ENCODE measurements at regions of chr1 and their contacts with region 1.

Region 1: DNA sequence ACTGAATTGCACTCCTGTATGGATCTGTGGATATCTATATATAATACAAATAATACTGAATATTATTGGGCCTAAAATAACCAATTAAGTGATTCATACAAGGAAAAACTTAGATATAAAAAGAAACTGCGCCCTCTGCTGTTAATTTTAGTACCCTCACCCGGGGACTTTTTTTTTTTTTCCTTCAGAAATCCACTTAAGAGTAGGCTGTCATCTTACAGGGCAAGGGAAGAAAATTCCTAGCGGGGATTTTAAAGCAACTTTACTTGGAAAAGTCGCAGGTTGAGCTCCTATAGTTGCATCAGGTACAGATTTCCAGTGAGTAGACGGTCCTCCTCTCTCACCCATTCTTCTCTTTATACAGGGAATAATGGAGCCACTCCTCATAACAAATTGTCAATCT is 1.3 kb downstream of the NTNG1 start:
- DNase-seq: peak; percentile 89
- H3K4me3 ChIP-seq: peak overlapping the region; percentile 92
- H3K27ac ChIP-seq: peak overlapping the region; percentile 91
- H3K4me1 ChIP-seq: peaks cover 41% of the 10 kb centered on the region
- H3K27me3 ChIP-seq: no peaks in the 10 kb centered on the region
- CTCF ChIP-seq: peak; percentile 77

Region 2: GRCh38 chr1:106022312-106022902 is 1119.7 kb before region 1 on chr1:
- CTCF ChIA-PET with region 1: no interaction called
- POLR2A ChIA-PET with region 1: no interaction called
- intact Hi-C with region 1: loop called (anchors 10 kb)
- DNase-seq: peak; percentile 54
- H3K4me3 ChIP-seq: no peak overlapping the region
- H3K27ac ChIP-seq: peak overlapping the region; percentile 15
- H3K4me1 ChIP-seq: peaks cover 7% of the 10 kb centered on the region
- H3K27me3 ChIP-seq: no peaks in the 10 kb centered on the region
- CTCF ChIP-seq: peak; percentile 71

Region 3: DNA sequence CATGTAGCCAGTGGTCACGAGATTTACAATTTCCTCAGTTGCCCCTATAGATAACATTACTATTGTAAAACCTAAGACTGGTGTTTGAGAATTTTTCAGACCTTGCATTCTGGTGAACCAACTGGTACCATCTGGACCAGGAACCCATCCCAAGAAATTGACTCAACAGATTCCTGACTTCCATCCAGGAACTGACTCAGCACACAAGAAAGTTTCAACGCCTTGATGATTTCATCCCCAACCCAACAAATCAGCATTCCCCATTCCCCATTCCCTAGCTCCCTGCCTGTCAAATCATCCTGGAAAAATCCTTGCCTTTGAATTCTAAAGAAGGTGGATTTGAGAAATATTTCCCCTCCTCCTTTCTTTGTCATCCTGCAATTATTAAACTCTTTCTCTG is 615.5 kb before region 1 on chr1:
- CTCF ChIA-PET with region 1: no interaction called
- POLR2A ChIA-PET with region 1: no interaction called
- intact Hi-C with region 1: no loop called
- DNase-seq: no peak
- H3K4me3 ChIP-seq: no peak overlapping the region
- H3K27ac ChIP-seq: no peak overlapping the region
- H3K4me1 ChIP-seq: peaks cover 9% of the 10 kb centered on the region
- H3K27me3 ChIP-seq: no peaks in the 10 kb centered on the region
- CTCF ChIP-seq: no peak

Region 4: DNA sequence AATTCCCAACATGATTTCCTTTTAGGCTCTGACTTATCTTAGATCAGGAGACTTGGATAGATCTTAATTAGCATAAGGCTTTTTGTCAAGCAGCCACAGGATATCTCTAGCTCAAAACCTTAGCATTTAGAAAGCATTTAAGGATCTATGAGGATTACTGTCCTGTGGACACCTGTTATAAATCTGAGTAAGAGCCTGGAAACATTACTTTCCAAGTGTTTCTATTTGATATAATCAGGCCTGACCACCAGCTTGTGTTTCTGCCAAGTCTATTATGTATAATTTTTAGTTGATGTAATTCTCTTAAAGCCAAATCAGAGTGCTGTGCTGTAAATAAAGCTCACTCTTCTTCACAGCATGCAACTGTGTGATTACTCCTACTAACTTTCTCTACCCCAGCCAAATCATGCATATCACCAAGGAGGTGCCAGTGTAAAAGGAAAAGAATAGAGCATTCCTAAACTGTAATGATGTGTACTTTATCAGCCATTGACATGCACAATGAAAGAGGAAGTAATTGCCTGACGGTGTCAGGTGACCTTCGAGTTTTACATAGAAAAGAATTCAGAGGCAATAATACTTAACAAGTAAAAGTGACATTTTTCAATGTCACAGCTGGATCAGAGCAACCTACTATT is 395.6 kb before region 1 on chr1:
- CTCF ChIA-PET with region 1: no interaction called
- POLR2A ChIA-PET with region 1: no interaction called
- intact Hi-C with region 1: loop called (anchors 2 kb)
- DNase-seq: peak; percentile 97
- H3K4me3 ChIP-seq: no peak overlapping the region
- H3K27ac ChIP-seq: peak overlapping the region; percentile 55
- H3K4me1 ChIP-seq: peaks cover 33% of the 10 kb centered on the region
- H3K27me3 ChIP-seq: no peaks in the 10 kb centered on the region
- CTCF ChIP-seq: no peak

Region 5: GRCh38 chr1:106924357-106924756 is 217.8 kb before region 1 on chr1:
- CTCF ChIA-PET with region 1: no interaction called
- POLR2A ChIA-PET with region 1: interaction called, 4 read pairs
- intact Hi-C with region 1: loop called (anchors 1 kb)
- DNase-seq: peak; percentile 24
- H3K4me3 ChIP-seq: no peak overlapping the region
- H3K27ac ChIP-seq: peak overlapping the region; percentile 98
- H3K4me1 ChIP-seq: peaks cover 74% of the 10 kb centered on the region
- H3K27me3 ChIP-seq: no peaks in the 10 kb centered on the region
- CTCF ChIP-seq: no peak

Region 6: GRCh38 chr1:107056426-107057196 is 85.5 kb before region 1 on chr1 and contains the start of gene PRMT6:
- CTCF ChIA-PET with region 1: no interaction called
- POLR2A ChIA-PET with region 1: no interaction called
- intact Hi-C with region 1: loop called (anchors 1 kb)
- DNase-seq: peak; percentile 94
- H3K4me3 ChIP-seq: peak within 1 kb of the TSS; percentile 78
- H3K27ac ChIP-seq: peak within 1 kb of the TSS; percentile 89
- H3K4me1 ChIP-seq: peaks cover 13% of the 10 kb centered on the region
- H3K27me3 ChIP-seq: no peaks in the 10 kb centered on the region
- CTCF ChIP-seq: no peak
- total RNA-seq, gene PRMT6: 50.4 and 53.0 TPM in 2 replicates

Region 7: DNA sequence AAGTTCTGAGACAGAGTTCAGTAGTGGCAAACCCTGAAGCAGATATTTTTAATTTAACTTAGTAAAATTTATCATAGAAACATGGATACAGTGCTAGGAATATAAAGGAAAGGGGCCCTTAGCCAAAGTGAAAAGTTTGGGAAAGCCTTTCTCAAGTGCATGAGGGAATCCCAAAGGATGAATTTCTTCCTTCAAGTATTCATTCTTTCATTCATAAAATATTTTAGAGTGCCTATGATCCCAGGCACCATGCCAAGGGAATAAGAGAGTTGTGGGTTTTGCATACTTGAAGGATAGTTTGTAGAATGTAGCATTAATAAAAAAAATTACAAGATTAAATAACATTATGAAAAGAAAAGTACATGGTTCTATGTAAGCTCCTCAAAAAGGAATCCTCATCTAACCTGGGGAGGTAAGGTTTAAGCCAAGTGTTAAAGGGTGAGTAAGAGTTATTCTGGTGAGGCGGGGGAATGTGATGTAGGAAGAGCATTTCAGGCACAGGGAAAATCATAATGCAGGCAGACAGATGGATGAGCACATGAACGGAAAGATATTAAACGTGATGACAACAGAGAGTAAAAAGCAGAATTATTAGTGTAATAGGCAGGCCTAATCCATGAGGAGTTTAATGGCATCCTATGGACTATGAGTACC is 41.7 kb before region 1 on chr1:
- CTCF ChIA-PET with region 1: no interaction called
- POLR2A ChIA-PET with region 1: no interaction called
- intact Hi-C with region 1: no loop called
- DNase-seq: no peak
- H3K4me3 ChIP-seq: no peak overlapping the region
- H3K27ac ChIP-seq: no peak overlapping the region
- H3K4me1 ChIP-seq: no peaks in the 10 kb centered on the region
- H3K27me3 ChIP-seq: no peaks in the 10 kb centered on the region
- CTCF ChIP-seq: no peak

Region 8: GRCh38 chr1:107213225-107213624 is 71.1 kb after region 1 on chr1:
- CTCF ChIA-PET with region 1: no interaction called
- POLR2A ChIA-PET with region 1: no interaction called
- intact Hi-C with region 1: no loop called
- DNase-seq: no peak
- H3K4me3 ChIP-seq: no peak overlapping the region
- H3K27ac ChIP-seq: peak overlapping the region; percentile 35
- H3K4me1 ChIP-seq: peaks cover 17% of the 10 kb centered on the region
- H3K27me3 ChIP-seq: no peaks in the 10 kb centered on the region
- CTCF ChIP-seq: no peak

Region 9: DNA sequence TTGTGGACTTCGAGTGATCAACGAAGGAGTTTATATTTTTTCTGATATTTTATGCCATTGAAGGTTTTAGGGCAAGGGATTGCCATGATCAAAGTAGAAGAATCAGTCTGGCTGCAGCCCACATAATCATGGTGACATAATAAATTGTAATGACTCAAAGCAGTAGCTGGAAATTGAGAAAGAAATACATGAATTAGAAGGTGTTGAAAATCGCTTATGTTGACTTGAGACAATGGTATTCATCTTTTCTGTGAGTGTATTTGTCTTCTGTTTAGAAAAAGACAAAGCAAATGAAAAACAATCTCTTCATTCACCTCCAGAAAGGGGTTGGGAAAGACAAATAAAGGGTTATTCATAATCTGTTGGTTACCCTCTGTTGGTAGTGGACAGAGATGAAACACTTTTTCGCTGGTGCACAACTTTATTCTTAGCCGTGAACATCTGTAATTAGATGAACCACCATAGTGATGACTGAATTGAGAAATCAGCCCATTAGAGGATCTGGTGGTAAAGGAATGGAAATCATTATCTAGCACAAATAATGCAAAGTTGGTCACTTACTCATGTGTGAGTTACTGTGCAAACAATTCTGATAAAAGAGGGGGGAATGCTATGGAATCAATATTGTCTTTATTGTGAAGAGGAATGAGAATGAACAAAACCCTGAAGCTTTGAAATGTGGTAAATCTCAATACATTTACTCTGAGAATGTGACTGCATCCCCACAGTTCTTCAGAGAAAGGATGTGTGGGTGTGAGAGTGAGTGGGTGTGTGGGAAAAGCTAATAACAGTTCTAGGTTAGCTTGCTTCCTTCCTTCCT is 120.5 kb after region 1 on chr1:
- CTCF ChIA-PET with region 1: no interaction called
- POLR2A ChIA-PET with region 1: interaction called, 3 read pairs
- intact Hi-C with region 1: loop called (anchors 2 kb)
- DNase-seq: peak; percentile 98
- H3K4me3 ChIP-seq: peak overlapping the region; percentile 0
- H3K27ac ChIP-seq: peak overlapping the region; percentile 96
- H3K4me1 ChIP-seq: peaks cover 80% of the 10 kb centered on the region
- H3K27me3 ChIP-seq: no peaks in the 10 kb centered on the region
- CTCF ChIP-seq: no peak

Region 10: DNA sequence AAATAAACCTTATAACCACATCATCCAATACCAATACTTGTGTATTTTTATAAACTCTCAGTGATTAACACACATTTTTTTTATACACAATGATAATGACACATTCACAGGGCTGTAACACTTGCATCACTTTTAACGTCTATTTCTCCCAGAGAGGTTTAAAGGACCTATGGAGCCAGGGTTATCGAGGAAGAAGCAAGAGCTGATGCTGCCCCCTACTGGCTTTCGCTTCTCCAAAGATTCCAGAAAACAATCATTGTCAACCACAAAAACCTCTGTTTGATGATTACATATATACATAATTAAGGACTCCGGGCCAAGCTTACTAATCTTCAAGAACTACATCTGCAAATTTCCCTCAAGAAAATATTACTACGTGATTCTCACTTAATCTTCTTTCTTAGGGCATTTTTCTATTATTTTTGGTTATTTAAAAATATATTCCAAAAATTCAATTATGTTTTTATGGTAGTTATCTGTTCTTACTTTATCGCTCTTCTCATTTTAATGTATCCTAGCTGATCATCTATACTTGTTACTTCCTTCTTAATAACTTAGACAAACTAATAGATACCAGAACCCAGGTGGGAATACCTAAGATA is 608.3 kb after region 1 on chr1:
- CTCF ChIA-PET with region 1: interaction called, 3 read pairs
- POLR2A ChIA-PET with region 1: no interaction called
- intact Hi-C with region 1: loop called (anchors 5 kb)
- DNase-seq: peak; percentile 90
- H3K4me3 ChIP-seq: no peak overlapping the region
- H3K27ac ChIP-seq: no peak overlapping the region
- H3K4me1 ChIP-seq: peaks cover 25% of the 10 kb centered on the region
- H3K27me3 ChIP-seq: no peaks in the 10 kb centered on the region
- CTCF ChIP-seq: peak; percentile 86